ENCODE measurements at regions of chr6 and their contacts with region 1.

Region 1: DNA sequence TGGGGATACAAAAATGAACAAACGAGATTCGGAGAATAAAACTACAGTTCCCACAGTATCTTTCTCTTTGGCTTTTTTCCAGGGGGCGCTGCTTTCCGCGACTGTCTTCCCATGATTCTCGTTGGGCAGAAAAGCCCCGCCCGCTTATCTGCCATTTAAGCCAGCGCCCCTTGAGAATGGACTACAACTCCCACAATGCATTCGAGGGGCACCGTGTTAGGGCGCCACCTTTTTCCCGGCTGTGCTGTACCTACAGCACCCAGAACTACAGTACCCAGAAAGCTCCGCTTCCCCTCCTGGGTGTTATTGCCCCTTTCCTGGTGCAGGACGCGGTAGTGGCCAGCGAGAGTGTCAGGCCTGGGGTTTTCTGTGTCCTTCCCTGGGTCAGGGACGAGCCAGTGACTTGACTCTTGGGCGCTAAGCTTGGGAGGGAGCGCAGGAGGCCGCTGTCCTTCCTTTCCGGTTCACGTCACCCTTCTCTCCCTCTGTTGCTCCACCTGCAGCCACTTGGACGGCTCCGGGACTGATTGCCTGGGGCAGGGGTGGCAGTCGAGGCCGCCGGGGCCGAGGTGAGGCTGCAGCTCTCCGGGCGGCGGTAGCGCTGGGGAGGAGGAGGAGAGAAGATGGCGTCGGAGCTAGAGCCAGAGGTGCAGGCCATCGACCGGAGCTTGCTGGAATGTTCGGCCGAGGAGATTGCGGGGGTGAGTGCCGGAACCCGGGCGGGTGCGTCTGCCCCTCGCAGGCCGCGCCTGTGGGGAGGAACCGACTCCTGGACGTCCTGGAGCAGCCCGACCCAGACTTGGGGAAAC is at the start of gene UBR2:
- DNase-seq: peak; percentile 98
- H3K4me3 Mint-ChIP-seq: peak within 1 kb of the TSS; percentile 97
- H3K27ac Mint-ChIP-seq: peak within 1 kb of the TSS; percentile 92
- H3K4me1 Mint-ChIP-seq: peaks cover 26% of the 10 kb centered on the region
- H3K27me3 Mint-ChIP-seq: no peaks in the 10 kb centered on the region
- total RNA-seq, gene UBR2: 23.1 to 23.5 TPM

Region 2: DNA sequence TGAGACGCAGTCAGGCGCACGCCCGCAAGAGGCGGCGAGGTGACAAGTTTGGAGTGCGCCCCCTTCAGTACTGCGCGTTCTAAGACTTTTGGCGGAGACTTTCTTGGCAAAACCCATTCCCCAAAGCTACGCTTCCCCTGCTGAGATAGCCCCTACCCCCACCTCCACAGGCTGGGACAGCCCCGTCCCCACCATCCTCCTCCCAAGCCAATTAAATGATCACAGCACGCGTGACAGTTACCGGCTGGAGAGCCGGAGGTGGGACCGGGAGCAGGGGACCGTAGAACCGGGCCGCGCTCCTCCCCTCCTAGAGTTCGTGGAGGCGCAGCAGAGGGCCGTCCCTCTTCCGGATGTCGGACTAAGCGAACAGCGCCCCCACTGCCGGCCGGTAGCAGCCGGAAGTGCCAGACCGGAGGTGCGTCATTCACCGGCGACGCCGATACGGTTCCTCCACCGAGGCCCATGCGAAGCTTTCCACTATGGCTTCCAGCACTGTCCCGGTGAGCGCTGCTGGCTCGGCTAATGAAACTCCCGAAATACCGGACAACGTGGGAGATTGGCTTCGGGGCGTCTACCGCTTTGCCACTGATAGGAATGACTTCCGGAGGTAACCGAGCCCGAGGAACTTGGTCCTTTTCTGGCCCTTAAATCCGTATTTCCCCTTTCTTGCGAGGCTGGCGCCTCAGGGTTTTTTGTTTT is 776.5 kb before region 1 on chr6 and contains the start of gene TOMM6:
- CTCF ChIA-PET with region 1: no interaction called
- intact Hi-C with region 1: loop called (anchors 5 kb)
- DNase-seq: peak; percentile 97
- H3K4me3 Mint-ChIP-seq: peak within 1 kb of the TSS; percentile 92
- H3K27ac Mint-ChIP-seq: peak within 1 kb of the TSS; percentile 94
- H3K4me1 Mint-ChIP-seq: peaks cover 24% of the 10 kb centered on the region
- H3K27me3 Mint-ChIP-seq: no peaks in the 10 kb centered on the region
- total RNA-seq, gene TOMM6: 285 to 299 TPM

Region 3: GRCh38 chr6:42429042-42429849 is 134.7 kb before region 1 on chr6:
- CTCF ChIA-PET with region 1: no interaction called
- intact Hi-C with region 1: no loop called
- DNase-seq: peak; percentile 38
- H3K4me3 Mint-ChIP-seq: peak overlapping the region; percentile 4
- H3K27ac Mint-ChIP-seq: peak overlapping the region; percentile 60
- H3K4me1 Mint-ChIP-seq: peaks cover 46% of the 10 kb centered on the region
- H3K27me3 Mint-ChIP-seq: no peaks in the 10 kb centered on the region

Region 4: DNA sequence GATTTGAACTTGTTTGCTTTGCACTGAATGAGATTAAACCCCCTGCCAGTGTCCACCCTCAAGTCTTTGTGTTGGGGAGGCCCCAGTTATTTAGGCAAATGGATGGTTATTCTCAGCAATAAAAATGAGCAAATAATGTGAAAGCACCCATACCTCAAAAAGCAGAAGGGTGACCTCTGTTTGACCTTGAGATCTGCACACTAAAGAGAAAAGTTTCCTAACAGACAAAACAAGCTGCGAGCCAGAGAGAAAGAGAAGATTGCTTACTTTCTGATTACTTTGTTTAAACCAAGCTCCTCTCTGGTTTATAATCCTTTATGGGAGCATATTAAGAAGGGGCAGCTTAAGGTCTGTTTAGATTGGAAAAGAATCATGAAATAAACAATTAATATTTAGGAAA is 81.7 kb before region 1 on chr6:
- CTCF ChIA-PET with region 1: no interaction called
- intact Hi-C with region 1: no loop called
- DNase-seq: no peak
- H3K4me3 Mint-ChIP-seq: no peak overlapping the region
- H3K27ac Mint-ChIP-seq: no peak overlapping the region
- H3K4me1 Mint-ChIP-seq: no peaks in the 10 kb centered on the region
- H3K27me3 Mint-ChIP-seq: no peaks in the 10 kb centered on the region

Region 5: DNA sequence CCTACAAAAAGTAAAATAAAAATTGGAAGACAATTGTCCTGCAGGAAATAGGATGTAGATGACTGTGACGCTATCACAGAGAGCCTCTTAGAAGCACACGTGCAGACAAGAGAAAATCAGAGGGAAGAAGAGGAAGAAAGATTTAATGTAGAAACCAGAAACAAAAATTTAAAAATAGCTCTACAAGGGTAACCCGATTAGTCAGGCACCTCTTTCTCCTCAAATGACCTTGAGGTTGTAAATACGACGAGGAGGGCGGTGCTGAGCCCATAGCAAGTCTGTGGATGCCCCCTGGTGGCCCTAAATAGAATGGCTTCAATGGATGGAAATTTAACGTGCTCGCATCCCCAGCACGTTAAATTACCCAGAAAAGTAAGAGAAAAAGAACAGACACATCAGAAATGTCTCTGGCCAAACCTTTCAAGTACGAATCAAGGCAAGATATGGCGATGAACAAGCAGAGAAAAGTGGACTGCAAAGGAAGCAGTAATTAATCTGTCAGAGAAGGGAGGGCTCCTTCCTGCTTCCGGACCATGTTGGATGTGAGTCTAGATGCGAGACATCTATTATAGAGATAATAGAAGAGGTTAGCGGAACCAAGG is 162.7 kb after region 1 on chr6:
- CTCF ChIA-PET with region 1: no interaction called
- intact Hi-C with region 1: loop called (anchors 2 kb)
- DNase-seq: peak; percentile 84
- H3K4me3 Mint-ChIP-seq: peak overlapping the region; percentile 76
- H3K27ac Mint-ChIP-seq: peak overlapping the region; percentile 91
- H3K4me1 Mint-ChIP-seq: peaks cover 15% of the 10 kb centered on the region
- H3K27me3 Mint-ChIP-seq: no peaks in the 10 kb centered on the region

Region 6: GRCh38 chr6:42879372-42880239 is 315.7 kb after region 1 on chr6 and contains the start of gene RPL7L1:
- CTCF ChIA-PET with region 1: no interaction called
- intact Hi-C with region 1: loop called (anchors 1 kb)
- DNase-seq: peak; percentile 87
- H3K4me3 Mint-ChIP-seq: peak within 1 kb of the TSS; percentile 98
- H3K27ac Mint-ChIP-seq: peak within 1 kb of the TSS; percentile 99
- H3K4me1 Mint-ChIP-seq: peaks cover 23% of the 10 kb centered on the region
- H3K27me3 Mint-ChIP-seq: no peaks in the 10 kb centered on the region
- total RNA-seq, gene RPL7L1: 99.0 to 101 TPM